Activated B cell treated with CpG ODN at 0.5 μM for 24 hours (primary cell): ENCODE measurements at regions of chr14 and their contacts with region 1.

Region 1: DNA sequence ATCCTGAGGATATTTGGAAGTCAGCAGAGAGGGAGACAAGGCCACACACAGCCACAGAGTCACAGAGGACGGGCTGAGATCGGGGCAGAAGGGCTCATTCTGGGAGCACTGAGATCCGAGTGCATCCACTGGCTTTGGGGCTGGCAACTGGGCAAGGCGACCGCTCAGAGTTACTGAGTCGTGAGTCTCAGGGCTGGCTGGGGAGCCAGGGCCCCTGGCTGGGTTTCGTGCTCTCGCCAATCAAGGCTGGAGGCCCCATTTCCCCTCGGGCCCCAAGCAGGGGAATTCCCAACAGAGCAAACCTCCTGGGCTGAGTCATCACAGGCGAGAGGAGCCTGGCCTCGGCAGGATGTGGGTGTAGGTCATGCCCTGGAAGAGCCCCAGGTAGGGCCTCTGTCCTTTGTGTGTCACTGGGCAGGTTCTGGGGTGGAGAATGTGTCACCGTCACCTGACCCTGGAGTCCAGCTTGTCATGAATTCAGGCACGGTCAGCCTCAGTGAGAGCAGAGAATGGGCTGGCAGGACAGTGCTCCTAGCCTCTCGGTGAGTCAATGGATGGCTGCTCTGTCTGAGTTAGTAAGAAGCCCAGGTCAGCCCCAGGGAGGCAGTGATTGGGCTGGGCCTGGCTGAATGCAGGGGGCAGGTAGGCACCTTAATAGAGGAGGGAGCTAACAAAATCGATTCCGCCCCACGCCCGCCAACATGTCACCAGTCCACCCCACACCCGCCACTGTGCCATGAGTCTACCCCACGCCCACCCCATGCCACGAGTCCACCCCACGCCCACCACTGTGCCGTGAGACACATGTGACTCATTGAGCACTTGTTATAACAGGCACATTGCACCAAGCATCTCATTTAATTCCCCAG is 16.9 kb downstream of the ASB2 start:
- DNase-seq: peak; percentile 81
- ATAC-seq: peak; percentile 75
- H3K4me3 Mint-ChIP-seq: peak overlapping the region; percentile 80
- H3K27ac Mint-ChIP-seq: peak overlapping the region; percentile 93
- H3K4me1 Mint-ChIP-seq: peaks cover 95% of the 10 kb centered on the region
- H3K27me3 Mint-ChIP-seq: no peaks in the 10 kb centered on the region
- CTCF ChIP-seq: no peak

Region 2: DNA sequence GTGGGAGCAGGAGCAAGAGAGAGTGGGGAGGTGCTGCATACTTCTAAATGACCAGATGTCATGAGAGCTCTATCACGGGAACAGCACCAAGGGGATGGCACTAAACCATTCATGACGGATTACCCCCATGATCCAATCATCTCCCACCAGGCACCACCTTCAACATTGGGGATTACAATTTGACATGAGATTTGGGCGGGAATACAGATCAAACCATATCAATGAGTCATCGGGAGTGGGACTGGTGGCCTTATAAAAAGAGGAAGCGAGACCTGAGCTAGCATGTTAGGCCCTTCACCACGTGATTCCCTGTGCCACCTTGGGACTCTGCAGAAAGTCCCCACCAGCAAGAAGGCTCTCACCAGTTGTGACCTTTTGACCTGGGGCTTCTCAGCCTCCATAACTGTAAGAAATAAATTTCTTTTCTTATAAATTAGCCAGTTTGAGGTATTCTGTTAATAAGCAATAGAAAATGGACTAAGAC is 583.8 kb before region 1 on chr14:
- CTCF ChIA-PET with region 1: no interaction called
- POLR2A ChIA-PET with region 1: no interaction called
- intact Hi-C with region 1: loop called (anchors 5 kb)
- DNase-seq: peak; percentile 53
- ATAC-seq: peak; percentile 96
- H3K4me3 Mint-ChIP-seq: peak overlapping the region; percentile 57
- H3K27ac Mint-ChIP-seq: peak overlapping the region; percentile 92
- H3K4me1 Mint-ChIP-seq: peaks cover 55% of the 10 kb centered on the region
- H3K27me3 Mint-ChIP-seq: no peaks in the 10 kb centered on the region
- CTCF ChIP-seq: no peak

Region 3: DNA sequence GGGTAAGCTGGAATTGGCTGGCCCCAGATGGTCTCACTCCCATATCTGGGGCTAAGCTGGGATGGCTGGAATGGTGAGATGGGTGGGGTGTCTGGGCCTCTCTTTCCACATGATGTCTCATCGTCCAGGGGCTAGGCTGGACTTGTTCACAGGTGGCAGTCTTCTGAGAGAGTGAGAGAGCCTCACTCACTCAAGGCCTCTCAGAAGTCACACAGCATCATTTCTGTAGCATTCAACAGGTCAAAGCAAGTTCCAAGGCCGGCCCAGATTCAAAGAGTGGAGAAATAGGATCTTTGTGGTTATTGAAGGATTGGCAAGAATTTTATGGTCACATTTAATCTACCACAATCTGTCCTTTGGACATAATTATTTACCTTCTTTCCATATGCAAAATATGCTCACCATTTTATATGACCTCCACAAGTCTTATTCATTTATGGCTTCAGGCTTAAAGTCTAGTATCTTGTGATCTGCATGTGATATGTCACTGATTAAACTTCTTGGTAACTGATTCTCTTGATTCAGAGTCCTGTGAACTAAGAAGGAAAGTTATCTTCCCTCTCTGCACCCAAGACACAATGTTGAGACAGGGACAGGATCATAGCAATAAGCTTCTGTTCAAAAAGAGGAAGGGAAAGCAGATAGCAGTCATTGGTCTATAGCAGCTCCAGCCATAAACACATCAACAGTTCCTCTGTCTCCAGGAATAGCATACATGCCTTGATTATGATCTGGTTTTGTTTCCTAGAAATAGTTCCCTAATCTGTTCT is 425.8 kb before region 1 on chr14:
- CTCF ChIA-PET with region 1: no interaction called
- POLR2A ChIA-PET with region 1: interaction called, 11 read pairs
- intact Hi-C with region 1: no loop called
- DNase-seq: no peak
- ATAC-seq: peak; percentile 79
- H3K4me3 Mint-ChIP-seq: peak overlapping the region; percentile 15
- H3K27ac Mint-ChIP-seq: no peak overlapping the region
- H3K4me1 Mint-ChIP-seq: peaks cover 30% of the 10 kb centered on the region
- H3K27me3 Mint-ChIP-seq: no peaks in the 10 kb centered on the region
- CTCF ChIP-seq: no peak

Region 4: GRCh38 chr14:93977790-93978581 is 18.5 kb after region 1 on chr14:
- CTCF ChIA-PET with region 1: no interaction called
- POLR2A ChIA-PET with region 1: interaction called, 133 read pairs
- intact Hi-C with region 1: loop called (anchors 1 kb)
- DNase-seq: peak; percentile 40
- ATAC-seq: peak; percentile 84
- H3K4me3 Mint-ChIP-seq: peak overlapping the region; percentile 41
- H3K27ac Mint-ChIP-seq: peak overlapping the region; percentile 68
- H3K4me1 Mint-ChIP-seq: peaks cover 40% of the 10 kb centered on the region
- H3K27me3 Mint-ChIP-seq: peaks cover 29% of the 10 kb centered on the region
- CTCF ChIP-seq: no peak

Region 5: DNA sequence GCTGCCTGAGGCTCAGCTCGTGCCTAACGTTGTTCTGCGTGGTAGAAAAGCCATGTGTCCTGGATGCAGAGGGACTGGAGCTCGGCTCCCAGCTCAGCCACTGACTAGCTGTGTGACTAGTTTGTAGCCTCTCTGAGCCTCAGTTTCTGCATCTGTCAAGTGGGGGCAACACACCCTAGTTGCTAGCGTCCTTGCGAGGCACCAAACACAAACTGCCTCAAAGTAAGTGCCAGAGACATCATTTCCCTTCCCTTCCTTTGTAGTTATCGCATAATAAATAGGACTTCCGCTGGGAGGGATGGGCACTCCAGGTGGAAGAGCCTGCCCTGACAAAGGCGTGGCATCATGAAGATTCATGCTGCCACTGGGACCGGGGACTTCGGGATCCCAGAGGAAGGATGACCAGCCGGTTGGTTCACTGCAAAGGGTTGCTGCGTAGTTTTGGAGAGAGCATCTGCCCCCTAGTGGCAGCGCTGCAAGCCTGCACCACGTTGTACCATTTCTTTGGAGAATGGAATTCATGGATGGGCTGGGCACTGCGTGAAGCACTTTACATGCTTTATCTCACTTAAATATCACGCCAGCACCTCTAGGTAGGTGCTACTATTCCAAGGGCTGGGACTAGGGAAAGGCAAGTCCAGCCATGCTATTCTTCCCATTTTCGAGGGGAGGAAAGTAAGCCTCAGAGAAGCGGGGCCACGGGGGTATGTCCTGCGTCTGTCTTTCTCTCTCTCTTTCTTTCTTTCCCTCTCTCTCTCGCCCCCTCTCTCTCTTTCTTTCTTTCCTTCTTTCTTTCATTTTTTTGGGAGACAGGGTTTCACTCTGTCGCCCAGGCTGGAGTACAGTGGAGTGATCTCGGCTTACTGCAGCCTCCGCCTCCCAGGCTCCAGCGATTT is 42.3 kb after region 1 on chr14:
- CTCF ChIA-PET with region 1: interaction called, 3 read pairs
- POLR2A ChIA-PET with region 1: interaction called, 11 read pairs
- intact Hi-C with region 1: loop called (anchors 5 kb)
- DNase-seq: peak; percentile 52
- ATAC-seq: peak; percentile 89
- H3K4me3 Mint-ChIP-seq: no peak overlapping the region
- H3K27ac Mint-ChIP-seq: no peak overlapping the region
- H3K4me1 Mint-ChIP-seq: no peaks in the 10 kb centered on the region
- H3K27me3 Mint-ChIP-seq: peaks cover 27% of the 10 kb centered on the region
- CTCF ChIP-seq: peak; percentile 88